ENCODE measurements at regions of chr10 and their contacts with region 1.

Region 1: DNA sequence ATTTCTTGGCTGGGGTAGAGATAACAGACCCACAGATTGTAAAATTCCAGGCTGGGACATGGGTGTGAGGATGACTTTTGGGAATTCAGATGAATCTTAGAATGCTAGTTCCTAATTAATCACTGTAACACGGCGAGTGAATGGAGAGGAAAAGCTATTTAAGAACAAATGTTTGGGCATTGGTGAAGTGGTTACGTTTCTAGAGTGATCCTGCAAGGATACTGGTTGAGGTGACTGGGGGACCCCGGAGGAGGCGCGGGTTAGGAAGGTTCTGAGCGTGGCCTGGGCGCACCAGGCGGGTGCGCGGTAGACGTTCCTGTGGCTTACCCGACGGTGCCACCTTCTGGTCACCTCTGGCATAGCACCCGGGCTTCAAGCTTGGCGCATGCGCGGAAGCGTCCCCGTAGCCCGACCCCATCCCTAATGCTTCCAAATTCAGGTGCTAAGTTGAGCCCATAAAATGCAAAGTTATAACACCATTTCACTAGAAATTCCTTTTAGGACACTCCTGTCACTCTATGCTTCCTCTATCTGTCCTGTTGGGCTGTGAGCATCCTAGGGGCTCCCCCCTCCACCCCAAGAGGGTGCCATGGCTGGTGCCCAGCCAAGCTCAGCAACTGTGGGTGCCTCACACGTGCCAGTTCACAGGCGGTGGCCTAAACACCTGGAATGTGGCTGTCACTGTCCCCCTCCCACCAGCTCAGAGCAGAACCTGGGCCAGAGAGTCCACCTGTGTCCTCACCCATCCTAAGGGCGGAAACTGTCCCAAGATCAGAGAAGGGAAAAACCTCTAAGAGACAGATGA is 104.5 kb downstream of the PTPRE start:
- DNase-seq: peak; percentile 95
- H3K4me3 ChIP-seq: peak overlapping the region in 1 of 2 experiments; percentile 22; a peak in 2 of 4 replicates
- H3K27ac ChIP-seq: no peak overlapping the region
- H3K4me1 ChIP-seq: peaks cover 0 to 7% of the 10 kb centered on the region in 2 experiments; a peak in 1 of 4 replicates
- H3K27me3 ChIP-seq: no peaks in the 10 kb centered on the region
- CTCF ChIP-seq: peak; percentile 96
- EP300 ChIP-seq: no peak
- RAD21 ChIP-seq: peak; percentile 97

Region 2: GRCh38 chr10:127853868-127854768 is 157.3 kb before region 1 on chr10:
- CTCF ChIA-PET with region 1: interaction called, 22 read pairs
- POLR2A ChIA-PET with region 1: no interaction called
- DNase-seq: peak; percentile 86
- H3K4me3 ChIP-seq: no peak overlapping the region
- H3K27ac ChIP-seq: no peak overlapping the region
- H3K4me1 ChIP-seq: no peaks in the 10 kb centered on the region; a peak in 1 of 4 replicates
- H3K27me3 ChIP-seq: no peaks in the 10 kb centered on the region
- CTCF ChIP-seq: peak; percentile 84
- EP300 ChIP-seq: no peak
- RAD21 ChIP-seq: peak; percentile 95

Region 3: GRCh38 chr10:127906548-127907377 is 104.6 kb before region 1 on chr10 and contains the start of gene PTPRE:
- CTCF ChIA-PET with region 1: interaction called, 389 read pairs
- POLR2A ChIA-PET with region 1: interaction called, 3 read pairs
- DNase-seq: peak; percentile 96
- H3K4me3 ChIP-seq: peak within 1 kb of the TSS; percentile 70 to 77
- H3K27ac ChIP-seq: peak within 1 kb of the TSS; percentile 32 to 34
- H3K4me1 ChIP-seq: peaks cover 0 to 12% of the 10 kb centered on the region in 2 experiments; a peak in 1 of 4 replicates
- H3K27me3 ChIP-seq: no peaks in the 10 kb centered on the region
- CTCF ChIP-seq: peak; percentile 65
- EP300 ChIP-seq: no peak
- RAD21 ChIP-seq: peak; percentile 84
- polyA plus RNA-seq, gene PTPRE: 6.2 and 11.8 TPM in 2 replicates

Region 4: DNA sequence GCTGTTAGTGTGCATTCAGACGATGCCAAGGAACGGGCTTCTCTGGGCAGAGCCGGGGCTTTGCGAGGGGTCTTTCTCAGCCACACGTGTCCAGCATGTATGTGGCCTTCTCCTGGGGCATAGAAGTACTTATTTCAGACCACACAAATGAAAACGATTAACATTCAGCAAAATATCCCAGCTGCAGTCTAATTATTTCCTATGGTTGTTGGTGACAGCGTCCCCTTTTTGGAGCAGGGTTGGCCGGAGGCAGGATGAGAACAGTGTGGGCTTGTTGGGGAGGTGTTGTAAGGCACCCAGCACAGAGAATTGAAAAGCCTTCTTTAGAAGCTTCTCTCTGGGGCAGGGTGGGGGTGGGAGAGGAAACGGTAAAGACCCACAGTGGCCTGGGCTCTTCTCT is 50.3 kb before region 1 on chr10:
- CTCF ChIA-PET with region 1: interaction called, 16 read pairs
- POLR2A ChIA-PET with region 1: no interaction called
- DNase-seq: no peak
- H3K4me3 ChIP-seq: no peak overlapping the region
- H3K27ac ChIP-seq: no peak overlapping the region
- H3K4me1 ChIP-seq: peaks cover 0 to 4% of the 10 kb centered on the region in 2 experiments; a peak in 2 of 4 replicates
- H3K27me3 ChIP-seq: no peaks in the 10 kb centered on the region
- CTCF ChIP-seq: no peak
- EP300 ChIP-seq: no peak
- RAD21 ChIP-seq: no peak

Region 5: DNA sequence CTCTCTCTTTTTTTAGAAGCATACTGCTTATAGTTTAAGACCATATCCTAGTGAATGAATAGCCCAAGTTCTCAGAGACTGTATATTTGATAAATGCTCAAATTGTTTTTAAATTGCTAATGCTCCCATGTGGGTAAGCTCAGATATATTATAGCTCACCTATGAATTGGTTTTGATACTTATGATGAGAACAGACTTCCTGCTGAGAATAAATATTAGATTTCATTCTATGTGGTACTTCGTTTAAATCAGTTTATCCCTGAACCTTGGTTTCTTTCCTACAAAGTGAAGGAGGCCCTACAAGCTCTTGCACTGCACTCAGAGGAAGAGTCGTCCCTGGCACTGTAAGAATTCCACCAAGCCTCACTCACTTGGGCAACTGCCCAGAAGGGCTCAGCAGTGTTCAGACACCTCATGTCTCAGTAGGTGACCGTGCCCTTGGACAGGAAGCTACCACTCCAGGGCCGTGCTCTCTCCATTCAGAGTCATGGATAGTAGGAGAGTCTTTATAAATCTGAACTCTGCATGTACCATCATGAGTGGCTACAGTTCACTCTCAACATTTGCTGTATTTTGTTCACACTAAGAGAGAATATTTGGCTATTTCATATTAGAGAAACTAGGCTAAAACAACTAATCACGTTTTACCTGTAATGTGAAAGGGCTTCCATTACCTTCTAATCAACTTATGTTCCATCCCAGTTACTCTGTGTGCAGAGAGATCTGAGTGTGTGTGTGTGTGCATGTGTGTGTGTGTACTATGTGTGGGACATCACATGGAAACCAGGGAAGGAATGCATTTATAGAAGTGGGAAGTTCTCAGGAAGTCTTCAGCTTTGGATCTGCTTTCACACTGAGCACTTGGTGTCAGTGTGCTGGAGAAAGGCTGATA is 10.7 kb before region 1 on chr10:
- CTCF ChIA-PET with region 1: interaction called, 34 read pairs
- POLR2A ChIA-PET with region 1: no interaction called
- DNase-seq: no peak
- H3K4me3 ChIP-seq: no peak overlapping the region
- H3K27ac ChIP-seq: peak overlapping the region in 1 of 2 experiments; percentile 38; a peak in 2 of 4 replicates
- H3K4me1 ChIP-seq: peaks cover 9 to 10% of the 10 kb centered on the region in 2 experiments; a peak in 1 of 4 replicates
- H3K27me3 ChIP-seq: no peaks in the 10 kb centered on the region
- CTCF ChIP-seq: no peak
- EP300 ChIP-seq: no peak
- RAD21 ChIP-seq: no peak

Region 6: GRCh38 chr10:128064108-128064969 is 53.0 kb after region 1 on chr10:
- CTCF ChIA-PET with region 1: interaction called, 60 read pairs
- POLR2A ChIA-PET with region 1: no interaction called
- DNase-seq: no peak
- H3K4me3 ChIP-seq: no peak overlapping the region
- H3K27ac ChIP-seq: no peak overlapping the region
- H3K4me1 ChIP-seq: peaks cover 0 to 3% of the 10 kb centered on the region in 2 experiments; a peak in 1 of 4 replicates
- H3K27me3 ChIP-seq: no peaks in the 10 kb centered on the region
- CTCF ChIP-seq: no peak
- EP300 ChIP-seq: no peak
- RAD21 ChIP-seq: no peak

Region 7: DNA sequence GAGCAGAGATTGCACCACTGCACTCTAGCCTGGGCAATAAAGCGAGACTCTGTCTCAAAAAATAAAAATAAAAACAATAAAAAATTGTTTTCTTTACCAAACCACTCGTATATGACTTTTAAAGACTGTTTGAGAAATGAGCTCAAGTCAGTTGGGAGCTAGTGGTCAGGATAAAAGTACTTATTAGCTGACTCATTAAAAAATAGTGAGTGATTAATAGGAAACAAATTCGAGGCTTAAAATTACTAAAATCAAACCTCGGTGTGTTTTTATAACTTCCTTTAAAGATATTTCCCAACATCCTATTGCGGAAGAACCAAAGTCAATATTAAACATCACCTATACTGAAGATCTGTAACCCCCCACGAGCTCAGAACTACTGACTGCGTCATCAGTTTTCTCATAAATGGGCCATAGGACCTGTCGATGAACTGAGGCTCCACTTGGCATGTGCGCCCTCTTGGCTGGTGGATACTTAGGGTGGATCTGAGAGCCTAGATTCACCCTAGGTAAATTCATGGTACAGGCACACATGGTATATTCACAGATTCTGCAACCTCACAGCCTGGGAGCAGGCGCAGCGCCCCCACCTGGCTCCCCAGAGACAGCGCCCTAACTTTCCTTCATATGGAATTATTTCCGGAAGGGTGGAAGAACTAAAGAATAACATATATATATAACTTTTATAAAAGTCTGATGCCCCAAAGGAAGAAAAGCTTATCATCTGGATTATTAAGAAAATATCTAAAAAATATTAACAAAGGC is 105.7 kb after region 1 on chr10:
- CTCF ChIA-PET with region 1: no interaction called
- POLR2A ChIA-PET with region 1: no interaction called
- DNase-seq: no peak
- H3K4me3 ChIP-seq: no peak overlapping the region
- H3K27ac ChIP-seq: no peak overlapping the region
- H3K4me1 ChIP-seq: no peaks in the 10 kb centered on the region
- H3K27me3 ChIP-seq: no peaks in the 10 kb centered on the region
- CTCF ChIP-seq: peak; percentile 51
- EP300 ChIP-seq: no peak
- RAD21 ChIP-seq: no peak